H1 (cell line): ENCODE measurements at regions of chr1 and their contacts with region 1.

Region 1: GRCh38 chr1:199463521-199464128 is 563.9 kb upstream of the NR5A2 start:
- DNase-seq: peak in 1 of 2 experiments; percentile 55
- H3K4me3 ChIP-seq: no peak overlapping the region
- H3K27ac ChIP-seq: no peak overlapping the region
- H3K4me1 ChIP-seq: no peaks in the 10 kb centered on the region
- H3K27me3 ChIP-seq: no peaks in the 10 kb centered on the region
- CTCF ChIP-seq: peak; percentile 12 to 84 (median 78)
- EP300 ChIP-seq: no peak
- POLR2A ChIP-seq: no peak
- RAD21 ChIP-seq: peak; percentile 97

Region 2: GRCh38 chr1:198771563-198772153 is 692.0 kb before region 1 on chr1:
- CTCF ChIA-PET with region 1: interaction called, 13 read pairs
- POLR2A ChIA-PET with region 1: no interaction called
- DNase-seq: no peak
- H3K4me3 ChIP-seq: no peak overlapping the region
- H3K27ac ChIP-seq: no peak overlapping the region
- H3K4me1 ChIP-seq: no peaks in the 10 kb centered on the region; a peak in 1 of 7 replicates
- H3K27me3 ChIP-seq: no peaks in the 10 kb centered on the region
- CTCF ChIP-seq: peak in 2 of 3 experiments; percentile 46 to 62; a peak in 3 of 4 replicates
- EP300 ChIP-seq: no peak
- POLR2A ChIP-seq: no peak
- RAD21 ChIP-seq: peak; percentile 90 to 92

Region 3: DNA sequence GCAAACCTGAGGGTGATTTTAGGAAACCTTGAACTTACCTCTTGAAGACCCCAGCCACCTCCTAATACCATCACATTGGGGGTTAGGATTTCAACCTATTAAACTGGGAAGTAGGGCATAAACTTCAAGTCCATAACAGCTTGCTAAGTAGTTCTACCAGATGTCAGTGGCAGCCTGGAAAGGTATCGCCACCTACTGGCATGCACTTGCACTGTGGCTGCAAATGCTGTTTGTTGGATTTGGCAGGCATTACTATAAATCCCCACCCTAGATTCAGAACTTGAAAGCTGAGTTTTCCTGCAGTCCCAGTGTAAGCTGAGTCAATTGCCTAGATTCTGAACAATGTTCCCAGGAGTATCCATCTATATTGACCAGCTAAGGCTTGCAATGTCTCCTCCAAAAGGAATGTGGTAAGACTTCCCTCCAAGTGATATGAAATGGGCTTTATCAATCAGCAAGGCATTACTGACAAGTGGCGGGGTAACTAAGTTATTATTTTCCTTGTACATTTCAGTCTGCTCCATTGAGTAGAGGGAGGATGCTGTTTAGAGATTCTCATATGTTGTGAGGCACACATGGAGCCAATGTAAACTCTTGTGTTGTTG is 350.3 kb before region 1 on chr1:
- CTCF ChIA-PET with region 1: interaction called, 10 read pairs
- POLR2A ChIA-PET with region 1: no interaction called
- DNase-seq: peak; percentile 38 to 73
- H3K4me3 ChIP-seq: no peak overlapping the region
- H3K27ac ChIP-seq: no peak overlapping the region
- H3K4me1 ChIP-seq: 0 out of 7 replicates have a peak, but pooled peaks cover 0 to 5% (median 0%) of the 10 kb centered on the region in 4 experiments
- H3K27me3 ChIP-seq: no peaks in the 10 kb centered on the region
- CTCF ChIP-seq: peak; percentile 79 to 96 (median 92)
- EP300 ChIP-seq: no peak
- POLR2A ChIP-seq: no peak
- RAD21 ChIP-seq: peak; percentile 87 to 91

Region 4: DNA sequence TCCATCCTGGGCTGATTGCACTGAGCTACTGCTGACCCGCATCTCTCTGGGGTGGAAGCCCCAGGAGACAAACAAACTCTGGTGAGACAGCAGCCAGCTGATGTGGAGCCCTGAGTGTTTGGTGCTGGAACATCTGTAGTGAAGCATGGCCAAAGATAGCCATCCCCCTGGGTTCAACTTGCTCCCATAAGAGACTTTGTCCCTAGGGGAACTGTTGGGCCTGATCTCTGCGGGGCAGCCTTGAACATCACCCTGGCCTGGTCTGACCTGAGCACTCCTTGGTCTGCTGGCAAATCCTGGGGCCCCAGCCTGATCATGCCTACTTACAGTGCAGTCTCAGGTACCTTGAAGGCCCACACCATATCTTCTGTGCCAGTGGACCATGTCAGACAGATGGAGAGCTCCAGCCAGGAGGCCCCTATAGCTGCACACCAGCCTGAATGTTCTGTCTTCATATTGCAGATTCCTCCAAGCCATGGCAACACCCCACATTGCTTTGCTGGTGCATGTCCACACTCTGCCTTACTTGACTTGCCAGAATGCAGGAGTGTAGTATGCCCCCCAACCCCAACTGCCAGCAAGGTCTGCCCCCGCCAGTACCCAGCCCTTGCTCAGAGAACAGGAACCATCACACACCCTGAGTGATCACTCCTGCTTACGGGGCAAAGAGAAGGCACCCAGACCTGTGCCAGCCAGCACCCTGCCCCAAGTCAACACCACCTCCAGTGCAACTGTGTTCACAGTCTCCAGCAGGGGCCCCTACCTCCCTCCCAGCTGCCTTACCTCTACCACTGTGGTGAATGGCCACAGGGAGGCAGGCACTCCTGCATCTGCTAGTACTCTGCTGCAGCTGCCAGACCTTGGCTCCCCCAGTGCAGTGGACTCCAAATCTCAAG is 126.6 kb before region 1 on chr1:
- CTCF ChIA-PET with region 1: interaction called, 30 read pairs
- POLR2A ChIA-PET with region 1: no interaction called
- DNase-seq: peak; percentile 13 to 46
- H3K4me3 ChIP-seq: no peak overlapping the region
- H3K27ac ChIP-seq: no peak overlapping the region
- H3K4me1 ChIP-seq: no peaks in the 10 kb centered on the region
- H3K27me3 ChIP-seq: no peaks in the 10 kb centered on the region
- CTCF ChIP-seq: peak; percentile 58 to 96 (median 65)
- EP300 ChIP-seq: no peak
- POLR2A ChIP-seq: no peak
- RAD21 ChIP-seq: peak; percentile 53 to 66

Region 5: GRCh38 chr1:199422198-199422597 is 41.4 kb before region 1 on chr1:
- CTCF ChIA-PET with region 1: interaction called, 15 read pairs
- POLR2A ChIA-PET with region 1: no interaction called
- DNase-seq: peak; percentile 17 to 45
- H3K4me3 ChIP-seq: no peak overlapping the region
- H3K27ac ChIP-seq: no peak overlapping the region
- H3K4me1 ChIP-seq: no peaks in the 10 kb centered on the region
- H3K27me3 ChIP-seq: no peaks in the 10 kb centered on the region
- CTCF ChIP-seq: peak; percentile 13 to 72 (median 60)
- EP300 ChIP-seq: no peak
- POLR2A ChIP-seq: no peak
- RAD21 ChIP-seq: peak; percentile 80 to 90

Region 6: GRCh38 chr1:199452627-199453026 is 11.0 kb before region 1 on chr1:
- CTCF ChIA-PET with region 1: interaction called, 10 read pairs
- POLR2A ChIA-PET with region 1: no interaction called
- DNase-seq: no peak
- H3K4me3 ChIP-seq: no peak overlapping the region
- H3K27ac ChIP-seq: no peak overlapping the region
- H3K4me1 ChIP-seq: no peaks in the 10 kb centered on the region
- H3K27me3 ChIP-seq: no peaks in the 10 kb centered on the region
- CTCF ChIP-seq: no peak
- EP300 ChIP-seq: no peak
- POLR2A ChIP-seq: no peak
- RAD21 ChIP-seq: no peak

Region 7: GRCh38 chr1:199550199-199551065 is 86.8 kb after region 1 on chr1:
- CTCF ChIA-PET with region 1: interaction called, 11 read pairs
- POLR2A ChIA-PET with region 1: no interaction called
- DNase-seq: no peak
- H3K4me3 ChIP-seq: no peak overlapping the region
- H3K27ac ChIP-seq: no peak overlapping the region
- H3K4me1 ChIP-seq: no peaks in the 10 kb centered on the region
- H3K27me3 ChIP-seq: no peaks in the 10 kb centered on the region
- CTCF ChIP-seq: peak in 2 of 3 experiments; percentile 5; a peak in 2 of 4 replicates
- EP300 ChIP-seq: no peak
- POLR2A ChIP-seq: no peak
- RAD21 ChIP-seq: peak; percentile 20 to 42; a peak in 3 of 4 replicates

Region 8: DNA sequence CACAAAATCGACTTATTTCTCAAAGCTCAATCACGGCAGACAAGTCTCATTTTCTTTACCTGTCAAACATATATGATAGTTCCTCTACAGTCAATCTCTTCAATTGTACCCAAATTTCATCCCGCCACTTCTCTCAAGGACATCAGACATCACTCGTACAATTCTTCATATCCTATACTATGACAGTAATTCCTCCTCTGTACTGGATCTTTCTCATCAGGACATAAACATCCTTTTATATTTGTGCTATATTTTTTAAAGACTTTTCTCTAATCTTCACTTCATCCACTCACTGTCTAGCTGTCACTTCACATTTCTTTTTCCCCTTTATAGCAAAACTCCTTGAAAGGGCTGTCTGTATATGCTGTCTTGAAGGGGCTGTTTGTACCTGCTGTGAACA is 144.8 kb after region 1 on chr1:
- CTCF ChIA-PET with region 1: no interaction called
- POLR2A ChIA-PET with region 1: no interaction called
- DNase-seq: no peak
- H3K4me3 ChIP-seq: no peak overlapping the region
- H3K27ac ChIP-seq: no peak overlapping the region
- H3K4me1 ChIP-seq: no peaks in the 10 kb centered on the region
- H3K27me3 ChIP-seq: no peaks in the 10 kb centered on the region
- CTCF ChIP-seq: no peak
- EP300 ChIP-seq: no peak
- POLR2A ChIP-seq: no peak
- RAD21 ChIP-seq: no peak